MCF 10A (cell line): ENCODE measurements at regions of chr11 and their contacts with region 1.

Region 1: GRCh38 chr11:60265373-60266214 is 14.9 kb upstream of the MS4A4A start:
- DNase-seq: peak; percentile 66
- H3K4me3 Mint-ChIP-seq: no peak overlapping the region
- H3K27ac Mint-ChIP-seq: no peak overlapping the region
- H3K4me1 Mint-ChIP-seq: no peaks in the 10 kb centered on the region
- H3K27me3 Mint-ChIP-seq: peaks cover 12% of the 10 kb centered on the region
- CTCF ChIP-seq: peak; percentile 64

Region 2: DNA sequence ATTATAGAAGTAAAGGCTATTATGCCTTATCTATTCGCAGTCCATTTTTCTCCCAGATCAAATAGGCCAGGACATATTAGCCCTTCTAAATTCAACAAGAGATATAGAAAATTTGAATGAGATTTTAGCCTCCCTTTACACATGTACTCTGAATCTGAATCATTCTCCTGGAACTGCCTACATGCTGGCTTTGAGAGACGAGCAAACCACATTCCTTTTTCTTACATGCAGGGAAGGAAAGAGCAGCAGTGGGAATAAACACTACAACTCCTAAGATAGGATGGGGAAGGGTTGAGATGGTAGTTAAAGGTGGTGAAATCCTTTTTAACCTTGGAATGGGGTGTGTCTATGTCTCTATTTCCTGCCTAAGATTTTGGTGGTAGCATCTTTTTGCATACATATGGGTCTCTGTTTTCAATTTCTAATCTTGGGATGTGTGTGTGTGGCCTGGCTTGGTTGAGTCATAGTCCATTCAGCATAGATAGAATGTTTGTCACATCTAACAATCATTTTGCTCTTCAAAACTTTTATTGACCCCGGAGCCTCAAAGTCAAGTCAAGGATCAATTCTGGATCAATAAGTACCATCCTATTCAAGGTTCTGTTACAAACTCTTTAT is 236.5 kb before region 1 on chr11:
- CTCF ChIA-PET with region 1: no interaction called
- POLR2A ChIA-PET with region 1: no interaction called
- intact Hi-C with region 1: no loop called
- DNase-seq: no peak
- H3K4me3 Mint-ChIP-seq: no peak overlapping the region
- H3K27ac Mint-ChIP-seq: no peak overlapping the region
- H3K4me1 Mint-ChIP-seq: no peaks in the 10 kb centered on the region
- H3K27me3 Mint-ChIP-seq: peaks cover 4% of the 10 kb centered on the region
- CTCF ChIP-seq: no peak

Region 3: GRCh38 chr11:60251485-60252212 is 13.9 kb before region 1 on chr11:
- CTCF ChIA-PET with region 1: interaction called, 23 read pairs
- POLR2A ChIA-PET with region 1: interaction called, 4 read pairs
- intact Hi-C with region 1: no loop called
- DNase-seq: peak; percentile 18
- H3K4me3 Mint-ChIP-seq: no peak overlapping the region
- H3K27ac Mint-ChIP-seq: no peak overlapping the region
- H3K4me1 Mint-ChIP-seq: no peaks in the 10 kb centered on the region
- H3K27me3 Mint-ChIP-seq: peaks cover 44% of the 10 kb centered on the region
- CTCF ChIP-seq: no peak

Region 4: DNA sequence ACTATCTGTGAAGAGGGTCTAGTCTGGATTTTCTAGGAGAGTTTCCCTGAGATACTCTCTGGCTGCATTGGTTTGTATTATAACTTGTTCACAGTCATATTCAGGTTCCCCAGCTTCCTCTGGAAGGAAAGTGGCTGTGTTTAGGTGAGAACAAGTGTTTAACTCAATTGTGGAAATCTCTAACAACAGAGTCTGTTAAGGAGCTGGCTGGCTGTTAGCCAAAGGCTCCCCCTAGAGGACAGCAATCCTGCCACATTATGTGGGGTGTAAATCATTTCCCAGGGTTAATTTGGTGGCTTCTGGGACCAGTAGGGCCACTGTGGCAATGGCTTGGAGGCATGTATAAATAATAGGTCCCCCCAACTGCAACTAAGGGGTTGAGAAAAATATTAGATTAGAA is 79.9 kb after region 1 on chr11:
- CTCF ChIA-PET with region 1: interaction called, 10 read pairs
- POLR2A ChIA-PET with region 1: no interaction called
- intact Hi-C with region 1: loop called (anchors 1 kb)
- DNase-seq: peak; percentile 42
- H3K4me3 Mint-ChIP-seq: no peak overlapping the region
- H3K27ac Mint-ChIP-seq: no peak overlapping the region
- H3K4me1 Mint-ChIP-seq: no peaks in the 10 kb centered on the region
- H3K27me3 Mint-ChIP-seq: peaks cover 72% of the 10 kb centered on the region
- CTCF ChIP-seq: peak; percentile 24

Region 5: DNA sequence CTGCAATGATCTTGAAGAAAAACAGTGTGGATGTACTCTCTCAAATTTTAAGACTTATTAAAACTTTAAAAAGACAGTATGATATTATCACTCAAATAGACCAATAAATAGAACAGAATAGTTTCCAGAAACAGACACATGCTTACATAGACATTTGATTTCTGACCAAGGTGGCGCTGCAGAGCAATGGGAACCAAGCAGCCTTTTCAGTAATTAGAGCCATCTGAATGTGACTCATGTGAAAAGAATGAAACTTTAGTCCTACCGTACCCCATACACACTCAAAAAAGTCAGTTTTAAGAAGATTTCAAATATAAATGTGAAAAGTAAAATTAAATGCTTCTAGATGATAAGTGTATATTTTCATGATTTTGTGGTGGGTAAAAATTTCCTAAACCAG is 359.7 kb after region 1 on chr11:
- CTCF ChIA-PET with region 1: interaction called, 34 read pairs
- POLR2A ChIA-PET with region 1: no interaction called
- intact Hi-C with region 1: no loop called
- DNase-seq: peak; percentile 72
- H3K4me3 Mint-ChIP-seq: no peak overlapping the region
- H3K27ac Mint-ChIP-seq: no peak overlapping the region
- H3K4me1 Mint-ChIP-seq: no peaks in the 10 kb centered on the region
- H3K27me3 Mint-ChIP-seq: peaks cover 11% of the 10 kb centered on the region
- CTCF ChIP-seq: peak; percentile 15

Region 6: DNA sequence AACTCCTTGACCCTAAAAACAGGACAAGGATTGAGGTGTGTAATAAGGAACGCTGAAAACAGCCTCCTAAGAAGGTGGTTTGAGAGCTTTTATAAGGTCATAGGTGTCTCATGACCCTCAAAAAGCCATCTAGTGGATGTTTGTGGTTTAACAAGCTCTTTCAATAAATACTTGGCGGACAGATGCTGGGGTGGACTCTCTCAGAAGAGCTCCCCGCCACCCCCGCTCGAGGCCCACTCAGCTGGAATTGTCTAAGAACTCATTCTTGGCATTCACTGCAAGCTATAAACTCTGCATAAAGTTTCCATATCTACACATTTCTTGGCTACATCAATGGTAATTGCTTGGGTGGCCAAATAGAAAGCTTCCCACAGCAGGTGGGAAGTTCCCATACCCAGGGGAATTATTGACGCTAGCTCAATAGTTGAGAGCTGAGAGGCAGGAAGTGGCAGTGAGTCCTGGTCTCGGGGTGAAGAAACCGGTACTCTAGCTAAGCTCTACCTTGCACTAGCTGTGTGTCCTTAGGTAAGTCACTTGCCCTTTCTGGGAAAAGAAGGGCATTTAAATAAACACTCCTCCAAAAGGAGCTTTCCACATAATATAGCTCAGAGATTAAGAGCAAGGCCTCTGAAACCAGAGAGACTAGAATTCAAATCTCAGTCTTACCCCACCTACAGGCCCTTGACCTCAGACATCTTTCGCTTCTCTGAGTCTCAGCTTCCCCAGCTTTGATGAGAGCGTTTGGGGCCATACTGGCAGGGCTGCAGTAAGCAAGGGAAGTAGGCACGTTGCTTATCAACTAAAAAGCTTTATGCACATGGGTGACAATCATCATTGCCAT is 497.5 kb after region 1 on chr11:
- CTCF ChIA-PET with region 1: interaction called, 13 read pairs
- POLR2A ChIA-PET with region 1: no interaction called
- intact Hi-C with region 1: no loop called
- DNase-seq: peak; percentile 29
- H3K4me3 Mint-ChIP-seq: no peak overlapping the region
- H3K27ac Mint-ChIP-seq: no peak overlapping the region
- H3K4me1 Mint-ChIP-seq: no peaks in the 10 kb centered on the region
- H3K27me3 Mint-ChIP-seq: peaks cover 33% of the 10 kb centered on the region
- CTCF ChIP-seq: peak; percentile 30